Calu3 (cell line): ENCODE measurements at regions of chr1 and their contacts with region 1.

Region 1: GRCh38 chr1:155167166-155168104 is 5.7 kb downstream of the KRTCAP2 start:
- DNase-seq: peak; percentile 93
- H3K4me3 Mint-ChIP-seq: peak overlapping the region; percentile 53
- H3K27ac Mint-ChIP-seq: no peak overlapping the region
- H3K4me1 Mint-ChIP-seq: peaks cover 7% of the 10 kb centered on the region
- H3K27me3 Mint-ChIP-seq: no peaks in the 10 kb centered on the region
- CTCF ChIP-seq: peak; percentile 91

Region 2: GRCh38 chr1:155091071-155091709 is 76.2 kb before region 1 on chr1:
- CTCF ChIA-PET with region 1: interaction called, 68 read pairs
- intact Hi-C with region 1: loop called (anchors 1 kb)
- DNase-seq: peak; percentile 91
- H3K4me3 Mint-ChIP-seq: peak overlapping the region; percentile 29
- H3K27ac Mint-ChIP-seq: no peak overlapping the region
- H3K4me1 Mint-ChIP-seq: peaks cover 10% of the 10 kb centered on the region
- H3K27me3 Mint-ChIP-seq: peaks cover 21% of the 10 kb centered on the region
- CTCF ChIP-seq: peak; percentile 97

Region 3: GRCh38 chr1:155117617-155118016 is 49.8 kb before region 1 on chr1:
- CTCF ChIA-PET with region 1: interaction called, 17 read pairs
- intact Hi-C with region 1: loop called (anchors 1 kb)
- DNase-seq: no peak
- H3K4me3 Mint-ChIP-seq: no peak overlapping the region
- H3K27ac Mint-ChIP-seq: no peak overlapping the region
- H3K4me1 Mint-ChIP-seq: peaks cover 7% of the 10 kb centered on the region
- H3K27me3 Mint-ChIP-seq: peaks cover 43% of the 10 kb centered on the region
- CTCF ChIP-seq: no peak

Region 4: DNA sequence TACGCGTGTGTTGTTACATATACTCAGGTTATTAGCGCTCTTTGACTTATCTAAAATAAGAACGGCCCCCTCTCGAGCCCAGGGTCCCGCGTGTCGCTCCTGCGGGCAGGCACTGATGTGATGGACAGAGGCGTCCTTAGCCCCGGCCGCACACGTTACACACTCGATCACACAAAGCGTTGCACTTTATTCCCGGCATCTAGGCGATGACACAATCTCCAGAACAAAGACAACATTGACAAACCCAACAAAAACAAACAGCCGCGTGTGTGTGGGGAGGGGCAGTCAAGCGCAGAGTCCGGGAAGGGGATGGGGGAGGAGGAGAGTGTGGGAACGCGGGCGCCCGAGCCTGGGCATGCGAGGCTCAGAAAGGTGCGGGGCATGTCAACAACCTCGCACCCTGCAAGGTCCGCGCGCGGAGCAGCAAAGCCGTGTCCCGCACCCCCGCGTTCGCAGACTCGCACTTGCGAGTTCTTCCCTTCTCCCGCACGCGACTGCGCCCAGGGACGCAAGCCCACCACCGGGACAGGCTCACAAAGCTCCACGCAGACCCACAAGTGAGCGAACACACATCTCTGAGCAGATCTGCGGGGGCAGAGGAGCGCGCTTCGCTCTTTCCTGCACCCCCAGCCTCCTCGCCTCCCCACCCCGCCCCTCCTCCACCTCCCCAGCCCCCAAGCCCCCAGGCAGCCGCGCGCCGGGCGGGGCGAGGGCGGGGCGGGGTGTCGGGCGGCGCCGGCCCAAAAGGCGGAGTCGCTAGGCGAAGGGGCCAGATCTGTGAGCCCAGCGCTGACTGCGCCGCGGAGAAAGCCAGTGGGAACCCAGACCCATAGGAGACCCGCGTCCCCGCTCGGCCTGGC is 40.1 kb before region 1 on chr1 and contains the start of gene EFNA1:
- CTCF ChIA-PET with region 1: interaction called, 8 read pairs
- intact Hi-C with region 1: loop called (anchors 5 kb)
- DNase-seq: peak; percentile 88
- H3K4me3 Mint-ChIP-seq: peak within 1 kb of the TSS; percentile 91
- H3K27ac Mint-ChIP-seq: peak within 1 kb of the TSS; percentile 69
- H3K4me1 Mint-ChIP-seq: peaks cover 71% of the 10 kb centered on the region
- H3K27me3 Mint-ChIP-seq: no peaks in the 10 kb centered on the region
- CTCF ChIP-seq: no peak
- total RNA-seq, gene EFNA1: 33.7 and 41.7 TPM in 2 replicates

Region 5: DNA sequence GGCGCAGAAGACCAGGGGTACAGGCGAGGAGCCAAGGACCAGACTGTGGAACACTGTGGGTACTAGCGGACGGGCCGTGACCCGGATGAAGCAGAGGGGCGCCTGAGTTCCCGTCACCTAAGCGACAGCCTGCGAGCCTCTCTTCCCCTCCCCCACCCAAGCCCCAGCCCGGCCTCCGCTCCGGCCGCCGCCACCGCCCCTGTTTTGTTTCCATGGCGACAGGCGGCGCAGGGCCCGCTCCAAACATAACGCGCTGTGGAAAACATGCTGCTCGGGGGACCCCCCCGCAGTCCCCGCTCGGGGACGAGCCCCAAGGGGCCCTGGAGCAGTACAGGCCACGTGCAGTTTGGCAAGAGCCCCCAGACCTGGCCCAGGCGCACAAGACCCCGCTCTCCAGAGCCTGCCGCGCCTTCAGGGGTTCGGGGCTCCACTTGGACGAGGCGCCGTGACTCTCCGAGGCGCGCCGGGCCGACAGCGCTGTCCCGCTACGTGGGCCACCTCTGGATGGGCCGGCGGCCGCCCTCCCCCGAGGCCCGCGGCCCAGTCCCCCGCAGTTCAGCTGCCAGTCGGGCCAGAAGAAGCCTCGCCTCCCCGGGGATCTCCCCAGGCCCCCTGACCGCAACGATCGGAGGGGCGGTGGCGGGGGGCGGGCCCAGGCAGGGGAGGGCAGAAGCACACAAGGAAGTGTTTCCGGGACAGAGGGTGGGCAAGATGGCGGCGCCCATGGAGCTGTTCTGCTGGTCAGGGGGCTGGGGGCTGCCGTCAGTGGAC is 41.3 kb after region 1 on chr1 and contains the start of gene MTX1:
- CTCF ChIA-PET with region 1: no interaction called
- intact Hi-C with region 1: no loop called
- DNase-seq: peak; percentile 87
- H3K4me3 Mint-ChIP-seq: peak within 1 kb of the TSS; percentile 98
- H3K27ac Mint-ChIP-seq: peak within 1 kb of the TSS; percentile 92
- H3K4me1 Mint-ChIP-seq: peaks cover 30% of the 10 kb centered on the region
- H3K27me3 Mint-ChIP-seq: no peaks in the 10 kb centered on the region
- CTCF ChIP-seq: no peak
- total RNA-seq, gene MTX1: 58.9 and 60.0 TPM in 2 replicates